ENCODE measurements at regions of chr11 and their contacts with region 1.

Region 1: GRCh38 chr11:47980245-47981049 is at the start of gene PTPRJ:
- DNase-seq: peak in 8 of 9 experiments; percentile 39 to 85 (median 63)
- ATAC-seq: peak; percentile 70
- H3K4me3 ChIP-seq: peak within 1 kb of the TSS; percentile 43 to 65
- H3K4me3 Mint-ChIP-seq: peak within 1 kb of the TSS; percentile 93
- H3K27ac ChIP-seq: peak within 1 kb of the TSS; percentile 19 to 40
- H3K27ac Mint-ChIP-seq: peak within 1 kb of the TSS; percentile 52
- H3K4me1 ChIP-seq: peaks cover 30% of the 10 kb centered on the region
- H3K4me1 Mint-ChIP-seq: peaks cover 36% of the 10 kb centered on the region
- H3K27me3 ChIP-seq: no peaks in the 10 kb centered on the region
- H3K27me3 Mint-ChIP-seq: no peaks in the 10 kb centered on the region
- CTCF ChIP-seq: no peak
- total RNA-seq, gene PTPRJ: 26.9 to 31.4 TPM

Region 2: GRCh38 chr11:47325271-47326041 is 655.0 kb before region 1 on chr11:
- CTCF ChIA-PET with region 1: no interaction called
- POLR2A ChIA-PET with region 1: no interaction called
- intact Hi-C with region 1: no loop called
- DNase-seq: no peak
- ATAC-seq: no peak
- H3K4me3 ChIP-seq: no peak overlapping the region
- H3K4me3 Mint-ChIP-seq: no peak overlapping the region
- H3K27ac ChIP-seq: no peak overlapping the region
- H3K27ac Mint-ChIP-seq: peak overlapping the region; percentile 45
- H3K4me1 ChIP-seq: no peaks in the 10 kb centered on the region
- H3K4me1 Mint-ChIP-seq: no peaks in the 10 kb centered on the region
- H3K27me3 ChIP-seq: no peaks in the 10 kb centered on the region
- H3K27me3 Mint-ChIP-seq: no peaks in the 10 kb centered on the region
- CTCF ChIP-seq: no peak

Region 3: GRCh38 chr11:47938791-47939560 is 41.5 kb before region 1 on chr11:
- CTCF ChIA-PET with region 1: interaction called, 14 read pairs
- POLR2A ChIA-PET with region 1: no interaction called
- intact Hi-C with region 1: loop called in 1 of 2 experiments (anchors 5 kb)
- DNase-seq: no peak
- ATAC-seq: no peak
- H3K4me3 ChIP-seq: no peak overlapping the region
- H3K4me3 Mint-ChIP-seq: no peak overlapping the region
- H3K27ac ChIP-seq: no peak overlapping the region
- H3K27ac Mint-ChIP-seq: no peak overlapping the region
- H3K4me1 ChIP-seq: peaks cover 6% of the 10 kb centered on the region
- H3K4me1 Mint-ChIP-seq: peaks cover 13% of the 10 kb centered on the region
- H3K27me3 ChIP-seq: no peaks in the 10 kb centered on the region
- H3K27me3 Mint-ChIP-seq: no peaks in the 10 kb centered on the region
- CTCF ChIP-seq: no peak

Region 4: GRCh38 chr11:47946682-47947575 is 33.5 kb before region 1 on chr11:
- CTCF ChIA-PET with region 1: interaction called, 4 read pairs
- POLR2A ChIA-PET with region 1: interaction called, 4 read pairs
- intact Hi-C with region 1: loop called in 1 of 2 experiments (anchors 1 kb)
- DNase-seq: peak in 2 of 9 experiments; percentile 17 to 33
- ATAC-seq: no peak
- H3K4me3 ChIP-seq: no peak overlapping the region
- H3K4me3 Mint-ChIP-seq: no peak overlapping the region
- H3K27ac ChIP-seq: no peak overlapping the region
- H3K27ac Mint-ChIP-seq: no peak overlapping the region
- H3K4me1 ChIP-seq: peaks cover 22% of the 10 kb centered on the region
- H3K4me1 Mint-ChIP-seq: peaks cover 30% of the 10 kb centered on the region
- H3K27me3 ChIP-seq: no peaks in the 10 kb centered on the region
- H3K27me3 Mint-ChIP-seq: no peaks in the 10 kb centered on the region
- CTCF ChIP-seq: no peak

Region 5: DNA sequence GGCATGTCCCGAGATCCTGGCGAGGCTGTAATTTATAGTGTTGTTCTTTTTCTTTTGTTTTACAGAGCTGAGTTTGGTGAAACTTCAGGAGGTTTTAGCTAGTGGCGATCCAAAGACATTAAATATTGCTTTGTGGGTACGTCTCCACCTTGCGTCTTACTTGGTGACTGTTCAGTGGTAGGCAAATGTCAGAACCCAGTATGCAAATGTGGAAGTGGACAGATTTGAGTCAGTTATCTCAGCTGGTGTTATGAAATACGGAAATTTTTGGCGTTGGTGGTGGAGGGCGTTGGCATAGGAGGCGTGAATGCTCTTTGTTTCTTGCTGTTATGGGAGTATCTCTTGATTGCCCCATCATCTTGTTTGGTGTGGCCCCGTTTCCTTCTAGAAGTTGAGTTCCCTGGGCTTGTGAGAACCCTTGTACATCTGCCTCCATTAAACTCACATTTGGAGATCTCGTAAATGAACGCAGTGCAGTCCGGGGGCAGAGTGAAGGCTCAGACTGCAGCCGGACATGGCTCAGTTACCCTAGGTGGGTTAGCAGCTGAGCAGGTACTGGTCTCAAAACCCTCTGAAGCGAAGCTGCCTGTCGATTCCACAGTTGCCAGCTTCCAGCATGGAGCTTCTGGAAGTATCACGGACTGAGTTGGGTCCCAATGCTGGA is 39.8 kb after region 1 on chr11:
- CTCF ChIA-PET with region 1: no interaction called
- POLR2A ChIA-PET with region 1: interaction called, 4 read pairs
- intact Hi-C with region 1: loop called (anchors 5 kb)
- DNase-seq: peak in 2 of 9 experiments; percentile 75 to 83
- ATAC-seq: peak; percentile 32
- H3K4me3 ChIP-seq: no peak overlapping the region
- H3K4me3 Mint-ChIP-seq: peak overlapping the region; percentile 22
- H3K27ac ChIP-seq: peak overlapping the region in 1 of 2 experiments; percentile 91
- H3K27ac Mint-ChIP-seq: peak overlapping the region; percentile 80
- H3K4me1 ChIP-seq: peaks cover 50% of the 10 kb centered on the region
- H3K4me1 Mint-ChIP-seq: peaks cover 62% of the 10 kb centered on the region
- H3K27me3 ChIP-seq: no peaks in the 10 kb centered on the region
- H3K27me3 Mint-ChIP-seq: no peaks in the 10 kb centered on the region
- CTCF ChIP-seq: no peak

Region 6: GRCh38 chr11:48043111-48043990 is 62.9 kb after region 1 on chr11:
- CTCF ChIA-PET with region 1: no interaction called
- POLR2A ChIA-PET with region 1: no interaction called
- intact Hi-C with region 1: no loop called
- DNase-seq: peak in 1 of 9 experiments; percentile 55
- ATAC-seq: peak; percentile 62
- H3K4me3 ChIP-seq: no peak overlapping the region
- H3K4me3 Mint-ChIP-seq: peak overlapping the region; percentile 33
- H3K27ac ChIP-seq: no peak overlapping the region
- H3K27ac Mint-ChIP-seq: peak overlapping the region; percentile 69
- H3K4me1 ChIP-seq: peaks cover 17% of the 10 kb centered on the region
- H3K4me1 Mint-ChIP-seq: peaks cover 46% of the 10 kb centered on the region
- H3K27me3 ChIP-seq: no peaks in the 10 kb centered on the region
- H3K27me3 Mint-ChIP-seq: no peaks in the 10 kb centered on the region
- CTCF ChIP-seq: no peak

Region 7: GRCh38 chr11:48341466-48341865 is 361.0 kb after region 1 on chr11:
- CTCF ChIA-PET with region 1: no interaction called
- POLR2A ChIA-PET with region 1: no interaction called
- intact Hi-C with region 1: no loop called
- DNase-seq: peak in 3 of 9 experiments; percentile 22 to 55 (median 24)
- ATAC-seq: no peak
- H3K4me3 ChIP-seq: no peak overlapping the region
- H3K4me3 Mint-ChIP-seq: no peak overlapping the region
- H3K27ac ChIP-seq: no peak overlapping the region
- H3K27ac Mint-ChIP-seq: peak overlapping the region; percentile 6
- H3K4me1 ChIP-seq: peaks cover 7% of the 10 kb centered on the region
- H3K4me1 Mint-ChIP-seq: peaks cover 21% of the 10 kb centered on the region
- H3K27me3 ChIP-seq: no peaks in the 10 kb centered on the region
- H3K27me3 Mint-ChIP-seq: no peaks in the 10 kb centered on the region
- CTCF ChIP-seq: no peak